ENCODE measurements at regions of chr5 and their contacts with region 1.

Region 1: DNA sequence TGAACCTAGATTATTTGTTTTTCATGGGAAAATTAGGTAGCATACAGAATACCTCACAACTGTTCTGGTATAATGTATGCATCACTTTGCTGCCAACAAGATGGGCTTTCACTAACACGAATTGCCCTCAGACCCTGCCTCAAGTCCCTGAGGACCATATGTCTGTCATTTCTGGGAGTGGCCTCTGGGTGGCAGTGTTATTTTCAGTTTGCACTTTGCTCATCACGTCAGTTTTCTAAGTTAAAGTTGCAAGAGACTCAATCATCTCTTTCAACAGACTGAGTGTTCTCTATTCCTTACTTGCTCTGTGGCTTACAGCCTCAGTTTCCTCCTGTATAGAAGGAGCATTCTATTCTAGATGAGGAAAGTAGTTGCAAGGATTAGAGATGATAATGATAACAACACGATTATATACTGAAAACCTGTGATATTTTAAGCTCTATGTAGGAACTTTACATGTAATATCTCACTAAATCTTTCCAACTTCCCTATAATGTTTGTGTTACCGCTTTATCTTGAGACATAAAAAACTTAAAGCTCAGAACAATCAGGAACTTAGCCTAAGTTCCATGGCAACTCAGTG is 55.7 kb downstream of the TSSK1B start:
- DNase-seq: peak in 2 of 3 donors; percentile 27 to 67
- ATAC-seq: peak; percentile 48 to 66
- H3K4me3 ChIP-seq: no peak overlapping the region
- H3K27ac ChIP-seq: no peak overlapping the region
- H3K4me1 ChIP-seq: no peaks in the 10 kb centered on the region
- H3K27me3 ChIP-seq: no peaks in the 10 kb centered on the region

Region 2: DNA sequence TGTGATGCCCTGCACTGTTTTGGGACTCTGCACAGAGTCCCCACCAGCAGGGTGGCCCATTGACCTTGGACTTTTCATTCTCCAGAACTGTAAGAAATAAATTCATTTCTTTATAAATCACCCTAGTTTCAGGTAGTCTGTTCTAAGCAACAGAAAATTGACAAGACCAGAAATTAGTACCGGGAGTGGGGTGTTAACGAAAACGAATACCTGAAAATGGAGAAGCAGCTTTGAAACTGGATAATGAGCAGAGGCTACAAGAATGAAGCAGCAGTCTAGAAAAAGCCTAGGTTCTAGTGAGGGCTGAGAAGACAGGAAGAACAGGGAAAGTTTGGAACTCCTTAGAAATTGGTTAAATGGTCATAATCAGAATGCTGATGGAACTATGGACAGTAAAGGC is 111.3 kb after region 1 on chr5:
- intact Hi-C with region 1: loop called in 1 of 4 experiments (anchors 5 kb)
- DNase-seq: no peak
- ATAC-seq: no peak
- H3K4me3 ChIP-seq: no peak overlapping the region
- H3K27ac ChIP-seq: no peak overlapping the region
- H3K4me1 ChIP-seq: peaks cover 4% of the 10 kb centered on the region
- H3K27me3 ChIP-seq: no peaks in the 10 kb centered on the region

Region 3: GRCh38 chr5:113507601-113508000 is 128.6 kb after region 1 on chr5:
- intact Hi-C with region 1: loop called (anchors 5 to 10 kb)
- DNase-seq: no peak
- ATAC-seq: no peak
- H3K4me3 ChIP-seq: no peak overlapping the region
- H3K27ac ChIP-seq: no peak overlapping the region
- H3K4me1 ChIP-seq: no peaks in the 10 kb centered on the region
- H3K27me3 ChIP-seq: no peaks in the 10 kb centered on the region

Region 4: GRCh38 chr5:113513384-113514288 is 134.6 kb after region 1 on chr5 and contains the start of gene YTHDC2:
- intact Hi-C with region 1: loop called (anchors 5 to 10 kb)
- DNase-seq: peak; percentile 91 to 96 (median 95)
- ATAC-seq: peak; percentile 99
- H3K4me3 ChIP-seq: peak within 1 kb of the TSS; percentile 75
- H3K27ac ChIP-seq: peak within 1 kb of the TSS; percentile 91
- H3K4me1 ChIP-seq: no peaks in the 10 kb centered on the region
- H3K27me3 ChIP-seq: no peaks in the 10 kb centered on the region
- total RNA-seq, gene YTHDC2: 12.3 to 21.1 (median 18.5) TPM

Region 5: DNA sequence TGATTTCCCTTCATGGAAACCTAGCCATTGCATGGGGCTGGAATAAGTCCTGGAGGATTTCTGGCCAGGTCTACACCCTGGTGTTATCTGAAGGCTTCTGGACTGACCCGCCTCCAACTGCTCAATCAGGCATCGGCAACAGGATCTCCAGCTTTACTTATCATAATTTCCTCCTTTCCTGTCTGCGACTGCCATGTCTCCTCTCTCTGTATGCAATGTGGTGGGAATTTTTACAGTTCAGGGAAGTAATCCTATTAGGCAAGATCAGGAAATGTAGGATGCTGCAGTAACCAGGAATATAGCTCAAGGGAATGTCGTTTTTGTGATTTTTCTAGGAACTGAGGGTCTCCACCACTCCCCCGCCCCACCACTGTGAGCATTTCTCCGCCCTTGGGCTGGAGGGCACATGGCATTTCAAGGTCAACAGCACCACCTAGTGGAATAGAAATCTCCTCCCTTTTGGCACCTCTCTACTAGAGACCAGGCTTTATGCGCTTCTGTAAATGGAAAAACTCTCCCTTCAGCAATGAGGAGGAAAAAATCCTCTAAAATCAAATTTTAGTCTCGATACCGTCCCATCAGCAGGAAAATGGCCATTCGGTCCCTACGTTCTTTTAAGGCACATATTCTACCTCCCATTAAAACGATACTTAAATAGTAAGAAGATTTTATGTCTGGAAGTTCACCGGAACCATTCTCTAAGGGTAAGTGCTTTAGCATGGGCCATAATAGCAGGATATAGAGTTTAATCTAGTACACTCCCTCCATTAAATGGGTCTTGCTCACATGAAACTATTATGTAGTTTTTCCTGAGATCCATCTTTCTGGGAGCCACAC is 227.5 kb after region 1 on chr5:
- intact Hi-C with region 1: loop called in 1 of 4 experiments (anchors 10 kb)
- DNase-seq: peak; percentile 35 to 73 (median 57)
- ATAC-seq: peak; percentile 94 to 95
- H3K4me3 ChIP-seq: peak overlapping the region; percentile 18
- H3K27ac ChIP-seq: no peak overlapping the region
- H3K4me1 ChIP-seq: no peaks in the 10 kb centered on the region
- H3K27me3 ChIP-seq: no peaks in the 10 kb centered on the region